ENCODE measurements at regions of chr17 and their contacts with region 1.

Region 1: GRCh38 chr17:42193969-42194899 is at the start of gene GHDC:
- DNase-seq: peak; percentile 86
- ATAC-seq: peak; percentile 88
- H3K4me3 ChIP-seq: peak within 1 kb of the TSS; percentile 79 to 99 (median 88)
- H3K4me3 Mint-ChIP-seq: peak within 1 kb of the TSS; percentile 99
- H3K27ac ChIP-seq: peak within 1 kb of the TSS; percentile 64 to 79
- H3K27ac Mint-ChIP-seq: peak within 1 kb of the TSS; percentile 94
- H3K4me1 ChIP-seq: peaks cover 24 to 35% of the 10 kb centered on the region in 2 donors
- H3K4me1 Mint-ChIP-seq: peaks cover 38% of the 10 kb centered on the region
- H3K27me3 ChIP-seq: no peaks in the 10 kb centered on the region
- H3K27me3 Mint-ChIP-seq: no peaks in the 10 kb centered on the region
- CTCF ChIP-seq: no peak
- total RNA-seq, gene GHDC: 41.5 and 41.9 TPM in 2 replicates

Region 2: DNA sequence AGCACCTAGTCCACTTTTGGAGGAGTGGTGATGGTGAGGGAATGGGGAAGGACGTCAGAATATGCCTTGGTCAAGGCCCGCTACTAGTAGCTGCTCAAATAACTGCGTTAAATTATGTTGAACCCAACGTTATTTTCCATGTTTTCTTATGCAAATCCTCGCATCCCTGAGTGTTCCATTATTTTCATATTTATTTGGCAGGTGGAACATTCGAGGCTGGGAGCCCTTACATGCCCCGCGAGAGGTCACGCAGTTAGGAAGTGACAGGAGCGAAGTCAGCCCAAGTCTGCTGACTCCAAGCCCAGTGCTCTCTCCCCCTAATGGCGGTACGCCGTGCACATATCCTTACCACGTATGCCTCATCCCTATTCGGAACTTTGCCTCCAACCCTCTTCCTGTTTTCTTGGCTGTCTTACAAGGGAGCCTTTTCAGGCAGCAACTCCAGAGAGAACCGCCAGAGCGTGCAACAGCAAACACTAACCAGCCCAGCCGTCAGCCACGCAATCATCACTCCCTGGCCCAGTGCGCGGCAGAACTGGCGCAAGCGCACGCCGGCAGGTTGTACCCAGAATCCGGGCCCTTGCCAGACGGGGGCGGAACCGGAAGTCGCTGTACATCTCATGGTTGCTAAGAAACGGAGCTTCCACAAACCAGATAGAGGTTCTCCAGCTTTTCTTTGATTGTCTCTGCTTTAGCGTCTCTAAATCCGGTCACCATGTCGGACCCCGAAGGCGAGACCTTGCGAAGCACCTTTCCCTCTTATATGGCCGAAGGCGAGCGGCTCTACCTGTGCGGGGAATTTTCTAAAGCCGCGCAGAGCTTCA is 264.0 kb before region 1 on chr17 and contains the start of gene ODAD4:
- CTCF ChIA-PET with region 1: no interaction called
- POLR2A ChIA-PET with region 1: interaction called, 10 read pairs
- intact Hi-C with region 1: no loop called
- DNase-seq: peak; percentile 95
- ATAC-seq: peak; percentile 99
- H3K4me3 ChIP-seq: peak within 1 kb of the TSS; percentile 46 to 92 (median 81)
- H3K4me3 Mint-ChIP-seq: peak within 1 kb of the TSS; percentile 96
- H3K27ac ChIP-seq: peak within 1 kb of the TSS; percentile 60 to 83
- H3K27ac Mint-ChIP-seq: peak within 1 kb of the TSS; percentile 88
- H3K4me1 ChIP-seq: peaks cover 10 to 32% of the 10 kb centered on the region in 2 donors
- H3K4me1 Mint-ChIP-seq: peaks cover 30% of the 10 kb centered on the region
- H3K27me3 ChIP-seq: no peaks in the 10 kb centered on the region
- H3K27me3 Mint-ChIP-seq: no peaks in the 10 kb centered on the region
- CTCF ChIP-seq: no peak
- total RNA-seq, gene ODAD4: 0.27 and 0.56 TPM in 2 replicates

Region 3: GRCh38 chr17:42248351-42249179 is 54.3 kb after region 1 on chr17:
- CTCF ChIA-PET with region 1: interaction called, 3 read pairs
- POLR2A ChIA-PET with region 1: interaction called, 5 read pairs
- intact Hi-C with region 1: loop called (anchors 5 kb)
- DNase-seq: peak; percentile 87
- ATAC-seq: peak; percentile 97
- H3K4me3 ChIP-seq: peak overlapping the region; percentile 39 to 86 (median 61)
- H3K4me3 Mint-ChIP-seq: peak overlapping the region; percentile 88
- H3K27ac ChIP-seq: peak overlapping the region; percentile 84 to 93
- H3K27ac Mint-ChIP-seq: peak overlapping the region; percentile 95
- H3K4me1 ChIP-seq: peaks cover 20 to 24% of the 10 kb centered on the region in 2 donors
- H3K4me1 Mint-ChIP-seq: peaks cover 47% of the 10 kb centered on the region
- H3K27me3 ChIP-seq: no peaks in the 10 kb centered on the region
- H3K27me3 Mint-ChIP-seq: no peaks in the 10 kb centered on the region
- CTCF ChIP-seq: no peak

Region 4: DNA sequence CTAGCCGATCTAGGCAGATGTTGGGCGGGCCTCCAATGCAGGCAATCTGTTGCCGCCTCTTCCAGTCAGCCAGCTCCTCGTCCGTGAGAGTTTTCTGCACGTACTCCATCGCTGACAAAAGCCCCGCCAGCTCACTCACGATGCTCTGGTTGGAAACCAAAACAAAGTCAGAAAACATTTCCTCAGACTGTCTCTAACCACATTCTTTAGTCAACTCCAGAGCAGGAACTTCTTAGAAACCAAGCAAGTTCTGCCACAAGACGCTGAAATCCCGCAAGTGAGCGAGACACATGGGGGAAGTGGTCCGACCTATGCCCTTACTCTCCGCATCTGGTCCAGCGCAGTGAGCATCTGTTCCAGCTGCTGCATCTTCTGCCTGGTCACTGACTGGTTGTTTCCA is 143.2 kb after region 1 on chr17:
- CTCF ChIA-PET with region 1: no interaction called
- POLR2A ChIA-PET with region 1: no interaction called
- intact Hi-C with region 1: no loop called
- DNase-seq: peak; percentile 33
- ATAC-seq: peak; percentile 36
- H3K4me3 ChIP-seq: no peak overlapping the region
- H3K4me3 Mint-ChIP-seq: no peak overlapping the region
- H3K27ac ChIP-seq: no peak overlapping the region
- H3K27ac Mint-ChIP-seq: peak overlapping the region; percentile 59
- H3K4me1 ChIP-seq: peaks cover 0 to 3% of the 10 kb centered on the region in 2 donors
- H3K4me1 Mint-ChIP-seq: peaks cover 30% of the 10 kb centered on the region
- H3K27me3 ChIP-seq: no peaks in the 10 kb centered on the region
- H3K27me3 Mint-ChIP-seq: no peaks in the 10 kb centered on the region
- CTCF ChIP-seq: no peak